ENCODE measurements at regions of chr1 and their contacts with region 1.

Region 1: DNA sequence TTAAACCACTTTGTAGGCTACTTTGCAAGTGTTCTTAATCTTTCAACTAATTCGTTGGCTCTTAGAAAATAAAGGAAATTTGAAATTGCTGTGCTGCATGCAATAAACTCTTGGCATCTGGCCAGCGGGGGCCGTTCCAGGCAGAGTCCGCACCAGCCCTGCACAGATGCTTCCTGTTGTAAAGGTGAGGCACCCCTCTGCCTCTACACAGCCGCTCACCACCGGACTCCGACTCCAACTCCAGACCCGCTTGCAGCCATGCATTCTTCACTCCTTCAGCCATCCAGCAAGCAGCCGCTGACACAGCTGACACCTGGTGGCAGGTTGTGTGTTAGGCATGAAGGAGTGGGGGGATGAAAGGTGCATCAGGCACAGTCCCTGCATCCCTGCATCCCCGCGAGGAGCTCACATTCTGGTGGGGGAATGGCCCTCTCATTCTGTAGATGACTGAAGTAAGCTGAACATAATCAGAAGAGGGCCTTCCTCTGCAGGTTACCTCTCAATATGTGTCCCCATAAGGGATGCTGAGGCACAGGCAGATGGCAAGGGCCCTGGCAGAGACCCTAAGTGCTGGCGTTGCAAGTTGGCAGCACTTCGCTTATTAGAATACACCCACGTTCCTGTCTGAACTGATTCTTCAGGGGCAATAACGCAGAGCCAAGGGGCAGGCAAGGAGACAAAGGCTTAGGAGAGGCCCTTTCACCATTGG is 56.8 kb downstream of the GLIS1 start:
- DNase-seq: peak; percentile 40
- H3K4me3 ChIP-seq: no peak overlapping the region
- H3K27ac ChIP-seq: no peak overlapping the region
- H3K4me1 ChIP-seq: no peaks in the 10 kb centered on the region
- CTCF ChIP-seq: peak; percentile 69

Region 2: DNA sequence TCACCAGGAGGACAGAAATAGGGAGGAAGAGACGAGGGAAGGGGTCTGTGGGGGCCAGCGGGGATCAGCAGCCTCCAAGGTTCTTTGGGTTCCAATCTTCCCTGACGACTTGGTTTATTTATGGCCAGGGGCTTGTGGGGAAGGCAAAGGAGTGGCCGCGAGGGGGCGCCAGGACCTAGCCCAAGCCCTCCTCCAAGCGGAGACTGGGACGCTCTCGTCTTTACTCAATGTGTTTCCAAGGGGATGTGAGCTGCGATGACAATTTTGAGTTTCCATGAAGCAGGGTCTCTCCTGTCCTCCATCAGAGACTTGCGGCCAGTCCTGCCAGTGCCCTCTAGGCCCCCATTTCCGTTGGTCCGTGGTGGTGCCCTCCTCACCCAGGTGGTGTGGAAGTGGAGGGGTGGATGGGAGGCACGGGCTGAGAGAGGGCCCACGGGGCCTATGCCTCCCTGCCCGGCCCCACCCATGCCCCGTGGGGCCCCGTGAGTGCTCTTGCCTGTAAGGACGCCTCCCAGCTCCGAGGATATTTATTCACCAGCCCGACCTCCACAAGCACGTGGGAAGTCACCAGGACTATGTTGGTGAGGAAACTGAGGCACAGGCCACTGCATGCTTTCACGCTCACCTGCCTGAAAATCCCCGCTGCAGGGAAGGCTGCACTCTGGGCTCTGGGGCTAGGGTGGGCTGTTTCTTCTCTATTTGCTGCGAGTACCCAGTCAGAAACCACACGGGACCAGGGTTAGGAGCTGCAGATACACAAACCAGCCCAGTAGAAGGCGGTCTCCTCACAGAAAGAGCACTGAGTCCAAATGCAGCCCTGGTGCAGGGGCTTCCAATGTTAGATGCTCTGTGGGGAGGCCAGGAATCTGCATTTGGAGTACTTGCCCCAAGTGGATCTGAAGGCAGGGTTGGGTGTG is 196.4 kb before region 1 on chr1:
- CTCF ChIA-PET with region 1: no interaction called
- POLR2A ChIA-PET with region 1: no interaction called
- intact Hi-C with region 1: loop called (anchors 1 kb)
- DNase-seq: peak; percentile 64
- H3K4me3 ChIP-seq: no peak overlapping the region
- H3K27ac ChIP-seq: no peak overlapping the region
- H3K4me1 ChIP-seq: no peaks in the 10 kb centered on the region
- CTCF ChIP-seq: peak; percentile 88

Region 3: DNA sequence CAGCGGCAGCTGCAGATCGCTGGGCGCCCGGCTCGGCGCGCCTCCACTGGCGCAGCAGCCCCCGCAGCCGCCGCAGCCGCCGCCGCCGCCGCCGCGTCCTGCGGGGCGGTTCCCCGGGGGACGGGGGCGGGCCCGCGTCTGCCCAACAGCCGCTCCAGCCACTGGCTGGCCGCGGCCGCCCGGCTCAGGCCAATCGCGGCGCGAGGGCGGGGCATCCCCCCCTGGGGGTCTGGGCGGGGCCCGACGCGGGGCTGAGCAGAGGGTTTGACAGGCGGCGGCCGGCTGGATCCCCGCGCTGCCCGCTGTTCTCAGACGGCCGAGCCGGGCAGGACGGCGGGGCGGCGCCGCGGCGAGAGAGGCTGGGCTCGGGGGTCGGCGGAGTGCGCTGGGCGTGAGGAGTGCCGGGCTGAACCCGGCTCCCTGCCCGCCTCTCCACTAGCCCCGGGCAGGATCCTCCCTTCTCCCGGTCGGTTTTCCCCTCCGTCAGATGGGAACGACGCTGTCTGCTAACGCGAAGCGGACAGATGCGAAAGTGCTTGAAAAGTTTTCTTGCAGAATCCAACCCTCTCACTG is 57.1 kb after region 1 on chr1 and contains the start of gene GLIS1:
- CTCF ChIA-PET with region 1: interaction called, 10 read pairs
- POLR2A ChIA-PET with region 1: interaction called, 4 read pairs
- intact Hi-C with region 1: no loop called
- DNase-seq: peak; percentile 67
- H3K4me3 ChIP-seq: peak within 1 kb of the TSS; percentile 59
- H3K27ac ChIP-seq: no peak within 1 kb of the TSS
- H3K4me1 ChIP-seq: no peaks in the 10 kb centered on the region
- CTCF ChIP-seq: no peak
- total RNA-seq, gene GLIS1: not detected in 2 replicates

Region 4: GRCh38 chr1:53799141-53799540 is 117.0 kb after region 1 on chr1:
- CTCF ChIA-PET with region 1: no interaction called
- POLR2A ChIA-PET with region 1: no interaction called
- intact Hi-C with region 1: no loop called
- DNase-seq: no peak
- H3K4me3 ChIP-seq: no peak overlapping the region
- H3K27ac ChIP-seq: no peak overlapping the region
- H3K4me1 ChIP-seq: no peaks in the 10 kb centered on the region
- CTCF ChIP-seq: no peak

Region 5: GRCh38 chr1:53889304-53890298 is 207.5 kb after region 1 on chr1 and contains the start of gene YIPF1:
- CTCF ChIA-PET with region 1: no interaction called
- POLR2A ChIA-PET with region 1: no interaction called
- intact Hi-C with region 1: no loop called
- DNase-seq: peak; percentile 92
- H3K4me3 ChIP-seq: peak within 1 kb of the TSS; percentile 78
- H3K27ac ChIP-seq: no peak within 1 kb of the TSS
- H3K4me1 ChIP-seq: peaks cover 21% of the 10 kb centered on the region
- CTCF ChIP-seq: no peak
- total RNA-seq, gene YIPF1: 13.7 and 16.7 TPM in 2 replicates